ENCODE measurements at regions of chr7 and their contacts with region 1.

Region 1: DNA sequence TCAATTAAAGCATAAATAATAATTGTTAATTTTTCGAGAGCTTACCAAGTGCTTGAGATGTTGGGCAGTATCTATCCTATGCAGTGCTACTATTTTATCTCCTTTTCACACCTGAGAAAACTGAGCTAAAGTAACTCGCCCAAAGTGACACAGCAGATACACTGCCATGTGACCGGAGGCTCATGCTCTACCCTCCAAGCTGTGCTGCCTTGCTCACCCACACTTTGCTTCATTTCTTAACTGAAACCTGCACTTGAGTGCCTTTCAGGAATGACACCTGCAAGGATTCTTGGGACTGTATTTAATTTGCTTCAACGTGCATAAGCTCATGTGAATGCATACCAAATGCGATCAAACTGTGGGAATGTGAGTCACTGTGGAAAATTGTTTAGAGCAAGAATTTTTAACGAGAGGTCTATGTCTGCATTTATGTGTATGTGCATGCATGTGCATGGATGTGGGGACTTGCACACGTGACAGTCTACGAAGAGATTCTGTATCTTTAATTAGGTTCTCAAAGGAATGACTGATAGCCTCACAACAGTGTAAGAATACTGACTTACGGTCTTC is 119.2 kb downstream of the ADCYAP1R1 start:
- DNase-seq: no peak
- H3K4me3 ChIP-seq: no peak overlapping the region
- H3K27ac ChIP-seq: no peak overlapping the region
- H3K4me1 ChIP-seq: no peaks in the 10 kb centered on the region
- H3K27me3 ChIP-seq: no peaks in the 10 kb centered on the region
- CTCF ChIP-seq: no peak
- EP300 ChIP-seq: no peak
- POLR2A ChIP-seq: no peak

Region 2: GRCh38 chr7:31211281-31211680 is 40.0 kb after region 1 on chr7:
- intact Hi-C with region 1: no loop called
- DNase-seq: no peak
- H3K4me3 ChIP-seq: no peak overlapping the region
- H3K27ac ChIP-seq: no peak overlapping the region
- H3K4me1 ChIP-seq: no peaks in the 10 kb centered on the region
- H3K27me3 ChIP-seq: no peaks in the 10 kb centered on the region
- CTCF ChIP-seq: no peak
- EP300 ChIP-seq: no peak
- POLR2A ChIP-seq: no peak

Region 3: GRCh38 chr7:31362401-31362800 is 191.1 kb after region 1 on chr7:
- intact Hi-C with region 1: loop called in 1 of 4 experiments (anchors 2 kb)
- DNase-seq: no peak
- H3K4me3 ChIP-seq: no peak overlapping the region
- H3K27ac ChIP-seq: no peak overlapping the region
- H3K4me1 ChIP-seq: no peaks in the 10 kb centered on the region
- H3K27me3 ChIP-seq: no peaks in the 10 kb centered on the region
- CTCF ChIP-seq: no peak
- EP300 ChIP-seq: no peak
- POLR2A ChIP-seq: no peak

Measured in ovary (tissue), 10 donors.